ENCODE measurements at regions of chr12 and their contacts with region 1.

Region 1: GRCh38 chr12:54017878-54018467 is 9.2 kb downstream of the HOXC8 start:
- DNase-seq: peak; percentile 82
- H3K4me3 ChIP-seq: peak overlapping the region; percentile 88
- CTCF ChIP-seq: no peak

Region 2: GRCh38 chr12:53995378-53996239 is 22.4 kb before region 1 on chr12:
- CTCF ChIA-PET with region 1: interaction called, 385 read pairs
- POLR2A ChIA-PET with region 1: interaction called, 22 read pairs
- DNase-seq: no peak
- H3K4me3 ChIP-seq: peak overlapping the region; percentile 96
- CTCF ChIP-seq: no peak

Region 3: GRCh38 chr12:54005853-54006686 is 11.9 kb before region 1 on chr12:
- CTCF ChIA-PET with region 1: interaction called, 385 read pairs
- POLR2A ChIA-PET with region 1: interaction called, 53 read pairs
- DNase-seq: no peak
- H3K4me3 ChIP-seq: peak overlapping the region; percentile 96
- CTCF ChIP-seq: peak; percentile 90

Region 4: DNA sequence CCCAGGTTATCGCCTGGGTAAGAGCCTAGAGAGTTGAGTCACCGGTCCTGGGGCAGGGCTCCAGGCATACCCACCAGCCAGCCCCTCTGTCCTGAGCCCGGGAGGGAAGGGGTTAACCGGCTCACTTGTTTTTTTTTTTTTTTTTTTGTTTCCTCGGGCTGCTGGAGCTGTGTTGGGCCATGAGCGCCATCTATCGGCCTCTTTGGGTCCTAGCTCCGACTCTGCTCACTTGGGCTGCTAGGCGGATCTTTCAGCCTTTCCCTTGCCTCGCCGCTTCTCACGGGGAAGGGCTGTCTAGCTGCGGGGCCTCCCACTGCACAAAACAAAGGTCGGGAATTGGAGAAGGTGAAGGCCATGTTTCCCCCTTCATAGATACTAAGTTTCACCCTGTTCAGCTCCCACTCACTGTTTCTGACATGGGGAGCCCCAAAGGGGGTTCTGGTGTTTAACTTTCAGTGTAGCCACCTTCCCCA is 173.6 kb after region 1 on chr12:
- CTCF ChIA-PET with region 1: interaction called, 908 read pairs
- POLR2A ChIA-PET with region 1: interaction called, 5 read pairs
- DNase-seq: no peak
- H3K4me3 ChIP-seq: no peak overlapping the region
- CTCF ChIP-seq: peak; percentile 81

Region 5: DNA sequence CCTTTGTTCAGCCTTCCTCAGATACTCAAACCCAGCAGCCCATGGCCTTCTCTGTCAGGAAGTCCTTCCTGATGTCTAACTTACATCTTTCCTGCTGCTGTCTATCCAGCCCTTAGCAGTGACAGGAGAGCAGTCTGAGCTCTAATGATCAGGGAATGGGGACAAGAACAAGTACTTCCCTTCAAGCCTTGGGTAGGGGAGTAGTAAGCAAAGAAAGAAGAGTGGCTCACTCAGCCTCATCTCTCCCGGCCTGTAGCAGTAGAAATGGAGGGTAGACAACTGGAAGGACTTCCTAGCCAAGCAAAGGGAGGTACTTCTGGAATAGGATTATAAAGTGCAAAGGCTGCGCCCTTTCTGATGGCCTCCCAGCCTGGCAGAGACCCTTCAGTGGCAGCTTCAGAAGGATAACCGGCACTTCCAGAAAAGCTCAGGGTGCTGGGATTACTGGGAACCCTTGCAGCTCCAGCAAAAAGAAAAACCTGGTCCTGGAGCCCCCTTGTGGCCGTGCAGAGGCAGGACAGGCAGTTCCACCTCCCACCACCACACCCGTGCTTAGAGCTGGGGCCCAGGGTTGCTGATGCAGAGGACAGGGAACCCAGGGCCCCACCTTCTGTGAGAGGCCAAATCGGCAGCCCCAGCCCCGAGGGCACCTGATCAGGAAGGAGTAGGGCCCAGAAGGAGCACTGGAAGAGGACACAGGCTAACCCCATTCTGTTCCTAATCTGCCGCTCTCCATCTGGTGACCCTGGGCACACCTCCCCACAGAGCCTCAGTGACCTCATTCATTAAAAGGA is 183.2 kb after region 1 on chr12:
- CTCF ChIA-PET with region 1: interaction called, 908 read pairs
- POLR2A ChIA-PET with region 1: interaction called, 3 read pairs
- DNase-seq: no peak
- H3K4me3 ChIP-seq: no peak overlapping the region
- CTCF ChIP-seq: peak; percentile 98